Sigmoid colon (tissue), 7 donors: ENCODE measurements at regions of chr11 and their contacts with region 1.

Region 1: GRCh38 chr11:130861902-130862860 is 54.1 kb downstream of the SNX19 start:
- DNase-seq: peak; percentile 95
- H3K4me3 ChIP-seq: peak overlapping the region in 1 of 4 donors; percentile 5
- H3K27ac ChIP-seq: peak overlapping the region in 1 of 4 donors; percentile 11
- H3K4me1 ChIP-seq: peaks cover 0 to 29% (median 11%) of the 10 kb centered on the region in 4 donors
- H3K27me3 ChIP-seq: no peaks in the 10 kb centered on the region
- CTCF ChIP-seq: peak; percentile 100
- EP300 ChIP-seq: no peak
- POLR2A ChIP-seq: no peak

Region 2: DNA sequence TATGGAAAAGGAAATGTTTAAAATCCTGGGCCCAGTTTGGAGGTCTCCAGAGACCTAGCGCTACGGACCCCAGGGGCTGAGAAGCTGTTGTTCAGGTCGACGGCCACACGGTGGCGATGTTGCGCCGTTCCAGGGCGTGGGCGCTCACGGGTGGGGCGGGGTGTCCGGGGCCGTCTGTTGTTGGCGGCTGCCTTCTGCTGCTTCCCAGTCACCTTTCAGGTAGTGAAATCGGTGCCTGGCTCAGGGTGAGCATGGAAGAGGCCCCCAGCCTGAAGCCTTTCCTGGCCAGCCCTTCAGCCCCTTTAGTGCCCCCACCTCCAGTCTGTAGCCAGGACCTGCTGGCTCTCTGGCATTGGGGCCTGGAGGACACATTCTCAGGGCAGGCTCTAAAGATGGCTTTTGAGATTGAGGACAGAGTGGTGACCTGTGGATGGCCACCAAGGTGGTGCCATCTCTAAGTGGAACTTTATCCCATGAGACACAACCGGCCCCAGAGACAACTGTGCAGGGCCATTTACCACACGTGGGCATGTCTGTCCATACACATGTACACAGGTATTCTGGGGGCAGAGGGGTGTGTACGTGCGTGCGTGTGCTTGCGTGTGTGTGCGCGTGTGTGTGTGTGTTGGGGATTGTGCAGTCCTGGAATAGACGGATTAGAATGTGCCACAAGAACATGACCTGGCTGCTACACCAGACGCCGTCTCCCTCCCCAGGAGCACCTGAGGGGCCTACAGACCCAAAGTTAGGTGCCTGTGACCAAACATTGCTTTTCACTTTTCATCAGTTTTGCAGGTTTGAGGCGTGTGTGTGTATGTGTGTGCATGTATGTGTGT is 648.8 kb before region 1 on chr11:
- intact Hi-C with region 1: loop called (anchors 5 kb)
- DNase-seq: peak; percentile 77
- H3K4me3 ChIP-seq: no peak overlapping the region
- H3K27ac ChIP-seq: no peak overlapping the region
- H3K4me1 ChIP-seq: peaks cover 0 to 8% (median 0%) of the 10 kb centered on the region in 4 donors
- H3K27me3 ChIP-seq: no peaks in the 10 kb centered on the region
- CTCF ChIP-seq: peak; percentile 89 to 95 (median 90)
- EP300 ChIP-seq: no peak
- POLR2A ChIP-seq: no peak

Region 3: GRCh38 chr11:130623670-130624668 is 238.2 kb before region 1 on chr11:
- intact Hi-C with region 1: loop called (anchors 5 kb)
- DNase-seq: no peak
- H3K4me3 ChIP-seq: no peak overlapping the region
- H3K27ac ChIP-seq: peak overlapping the region; percentile 60 to 84 (median 74)
- H3K4me1 ChIP-seq: peaks cover 0 to 51% (median 46%) of the 10 kb centered on the region in 4 donors
- H3K27me3 ChIP-seq: no peaks in the 10 kb centered on the region
- CTCF ChIP-seq: peak in 3 of 4 experiments; percentile 27 to 44 (median 36)
- EP300 ChIP-seq: peak in 2 of 4 donors; percentile 54 to 70
- POLR2A ChIP-seq: no peak

Region 4: GRCh38 chr11:131345406-131345805 is 483.2 kb after region 1 on chr11:
- intact Hi-C with region 1: no loop called
- DNase-seq: no peak
- H3K4me3 ChIP-seq: no peak overlapping the region
- H3K27ac ChIP-seq: no peak overlapping the region
- H3K4me1 ChIP-seq: no peaks in the 10 kb centered on the region
- H3K27me3 ChIP-seq: no peaks in the 10 kb centered on the region
- CTCF ChIP-seq: no peak
- EP300 ChIP-seq: no peak
- POLR2A ChIP-seq: no peak

Region 5: DNA sequence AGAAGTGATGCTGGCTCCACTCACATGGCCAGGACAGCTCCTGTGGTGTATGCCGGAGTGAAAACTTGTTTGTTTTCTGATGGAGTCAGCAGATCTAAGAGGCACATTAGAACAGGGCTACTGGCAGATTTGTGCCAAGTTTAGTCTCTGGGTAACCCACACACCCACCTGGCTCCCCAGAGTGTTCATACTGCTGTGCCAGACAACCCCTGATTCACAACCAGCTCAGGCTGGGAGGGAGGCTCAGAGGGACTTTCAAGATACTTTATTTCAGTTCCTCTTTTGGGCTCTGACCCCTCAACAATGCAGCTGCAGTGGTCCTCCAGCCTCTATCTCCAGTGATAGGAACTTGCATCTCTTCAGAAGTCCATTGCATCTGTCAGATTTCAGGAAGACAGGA is 516.8 kb after region 1 on chr11:
- intact Hi-C with region 1: no loop called
- DNase-seq: no peak
- H3K4me3 ChIP-seq: no peak overlapping the region
- H3K27ac ChIP-seq: no peak overlapping the region
- H3K4me1 ChIP-seq: no peaks in the 10 kb centered on the region
- H3K27me3 ChIP-seq: peaks cover 0 to 6% (median 0%) of the 10 kb centered on the region in 3 donors
- CTCF ChIP-seq: no peak
- EP300 ChIP-seq: no peak
- POLR2A ChIP-seq: no peak